ENCODE measurements at regions of chr5 and their contacts with region 1.

Region 1: GRCh38 chr5:140401362-140402257 is at the start of gene ANKHD1:
- DNase-seq: peak; percentile 99
- H3K4me3 Mint-ChIP-seq: no peak within 1 kb of the TSS
- H3K27ac Mint-ChIP-seq: no peak within 1 kb of the TSS
- H3K4me1 Mint-ChIP-seq: peaks cover 27% of the 10 kb centered on the region
- H3K27me3 Mint-ChIP-seq: no peaks in the 10 kb centered on the region
- total RNA-seq, gene ANKHD1: 118 and 121 TPM in 2 replicates

Region 2: DNA sequence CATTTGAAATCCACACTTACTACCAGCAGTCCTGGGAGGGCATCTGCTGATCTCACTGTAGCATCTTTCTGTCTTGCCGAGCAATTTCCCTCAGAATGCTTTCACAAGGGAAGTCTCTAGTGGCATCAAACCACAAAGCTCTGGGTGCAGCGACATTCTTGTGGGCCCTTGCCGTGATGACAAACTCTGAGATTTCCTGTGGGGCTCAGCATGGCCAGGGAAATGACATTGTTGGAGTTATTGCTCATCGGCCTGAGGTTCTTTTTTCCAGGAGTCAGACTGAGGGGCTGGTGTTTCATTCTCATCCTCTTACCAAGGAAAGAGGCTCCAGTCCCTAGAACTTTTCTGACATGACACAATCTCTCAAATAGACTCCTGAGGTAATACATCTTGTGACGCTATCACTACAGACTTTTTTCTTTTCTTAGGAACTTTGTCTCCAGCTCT is 150.1 kb before region 1 on chr5:
- intact Hi-C with region 1: loop called (anchors 5 kb)
- DNase-seq: peak; percentile 91
- H3K4me3 Mint-ChIP-seq: peak overlapping the region; percentile 65
- H3K27ac Mint-ChIP-seq: peak overlapping the region; percentile 88
- H3K4me1 Mint-ChIP-seq: peaks cover 46% of the 10 kb centered on the region
- H3K27me3 Mint-ChIP-seq: no peaks in the 10 kb centered on the region

Region 3: GRCh38 chr5:140381972-140382371 is 19.6 kb before region 1 on chr5:
- intact Hi-C with region 1: no loop called
- DNase-seq: no peak
- H3K4me3 Mint-ChIP-seq: no peak overlapping the region
- H3K27ac Mint-ChIP-seq: peak overlapping the region; percentile 28
- H3K4me1 Mint-ChIP-seq: peaks cover 11% of the 10 kb centered on the region
- H3K27me3 Mint-ChIP-seq: no peaks in the 10 kb centered on the region

Region 4: DNA sequence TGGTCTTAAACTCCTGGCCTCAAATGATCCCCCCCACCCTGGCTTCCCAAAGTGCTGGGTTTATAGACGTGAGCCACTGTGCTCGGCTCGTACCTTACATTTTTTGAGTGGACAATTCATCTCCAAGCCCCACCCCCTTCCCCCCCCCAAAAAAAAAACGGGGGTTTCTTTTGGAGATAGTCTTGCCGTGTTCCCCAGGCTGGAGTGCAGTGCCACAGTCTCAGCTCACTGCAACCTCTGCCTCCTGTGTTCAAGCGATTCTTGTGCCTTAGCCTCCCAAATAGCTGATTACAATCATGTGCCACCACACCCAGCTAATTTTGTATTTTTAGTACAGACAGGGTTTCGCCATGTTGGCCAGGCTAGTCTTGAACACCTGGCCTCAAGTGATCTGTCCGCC is 31.3 kb after region 1 on chr5:
- intact Hi-C with region 1: no loop called
- DNase-seq: no peak
- H3K4me3 Mint-ChIP-seq: no peak overlapping the region
- H3K27ac Mint-ChIP-seq: no peak overlapping the region
- H3K4me1 Mint-ChIP-seq: peaks cover 5% of the 10 kb centered on the region
- H3K27me3 Mint-ChIP-seq: no peaks in the 10 kb centered on the region

Region 5: GRCh38 chr5:140557136-140557805 is 155.7 kb after region 1 on chr5 and contains the start of gene SRA1:
- intact Hi-C with region 1: loop called (anchors 2 kb)
- DNase-seq: peak; percentile 98
- H3K4me3 Mint-ChIP-seq: peak within 1 kb of the TSS; percentile 84
- H3K27ac Mint-ChIP-seq: peak within 1 kb of the TSS; percentile 82
- H3K4me1 Mint-ChIP-seq: peaks cover 47% of the 10 kb centered on the region
- H3K27me3 Mint-ChIP-seq: no peaks in the 10 kb centered on the region
- total RNA-seq, gene SRA1: 53.8 and 54.9 TPM in 2 replicates

Region 6: DNA sequence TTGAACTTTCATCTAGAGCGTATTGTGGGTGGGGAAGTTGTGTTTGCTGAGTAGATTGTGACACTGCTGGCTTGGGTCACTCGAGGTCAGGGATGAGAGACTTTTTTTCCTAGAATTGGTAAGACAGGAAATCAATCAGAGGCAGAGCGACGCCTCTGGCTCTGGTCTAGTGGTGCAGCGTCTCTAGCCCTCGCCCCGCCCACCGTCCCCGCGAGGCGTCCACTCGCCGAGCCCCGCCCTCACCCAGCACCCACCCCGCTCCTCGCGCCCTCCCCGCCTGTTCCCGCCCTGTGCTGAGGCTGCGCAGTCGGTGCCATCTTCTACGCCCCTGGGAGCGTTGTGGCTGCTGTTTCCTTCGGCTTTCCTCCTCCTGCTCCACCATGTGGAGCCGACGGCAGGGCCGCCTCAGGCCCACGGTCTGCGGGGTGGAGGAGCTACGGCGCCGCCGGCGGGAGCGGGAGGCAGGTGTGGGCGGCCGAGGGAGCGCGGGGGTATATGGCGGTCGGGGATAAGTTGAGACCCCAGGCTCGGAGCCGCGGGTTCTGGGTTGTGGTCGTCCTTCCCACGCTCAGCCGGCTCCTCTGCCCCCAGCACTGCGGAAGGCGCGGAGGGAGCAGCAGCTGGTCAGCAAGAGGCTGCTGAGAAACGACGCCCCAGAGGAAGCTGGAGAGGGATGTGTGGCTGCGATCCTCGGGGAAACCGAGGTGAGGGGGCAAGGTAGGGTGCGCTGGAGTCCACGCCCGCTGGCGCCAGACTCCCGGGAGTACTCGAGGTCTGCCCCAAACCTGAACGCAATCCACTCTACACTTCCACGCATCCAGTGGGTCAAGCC is 237.8 kb after region 1 on chr5 and contains the start of gene TMCO6:
- intact Hi-C with region 1: loop called (anchors 2 kb)
- DNase-seq: peak; percentile 98
- H3K4me3 Mint-ChIP-seq: peak within 1 kb of the TSS; percentile 86
- H3K27ac Mint-ChIP-seq: peak within 1 kb of the TSS; percentile 90
- H3K4me1 Mint-ChIP-seq: peaks cover 37% of the 10 kb centered on the region
- H3K27me3 Mint-ChIP-seq: no peaks in the 10 kb centered on the region
- total RNA-seq, gene TMCO6: 38.1 and 41.9 TPM in 2 replicates

Region 7: DNA sequence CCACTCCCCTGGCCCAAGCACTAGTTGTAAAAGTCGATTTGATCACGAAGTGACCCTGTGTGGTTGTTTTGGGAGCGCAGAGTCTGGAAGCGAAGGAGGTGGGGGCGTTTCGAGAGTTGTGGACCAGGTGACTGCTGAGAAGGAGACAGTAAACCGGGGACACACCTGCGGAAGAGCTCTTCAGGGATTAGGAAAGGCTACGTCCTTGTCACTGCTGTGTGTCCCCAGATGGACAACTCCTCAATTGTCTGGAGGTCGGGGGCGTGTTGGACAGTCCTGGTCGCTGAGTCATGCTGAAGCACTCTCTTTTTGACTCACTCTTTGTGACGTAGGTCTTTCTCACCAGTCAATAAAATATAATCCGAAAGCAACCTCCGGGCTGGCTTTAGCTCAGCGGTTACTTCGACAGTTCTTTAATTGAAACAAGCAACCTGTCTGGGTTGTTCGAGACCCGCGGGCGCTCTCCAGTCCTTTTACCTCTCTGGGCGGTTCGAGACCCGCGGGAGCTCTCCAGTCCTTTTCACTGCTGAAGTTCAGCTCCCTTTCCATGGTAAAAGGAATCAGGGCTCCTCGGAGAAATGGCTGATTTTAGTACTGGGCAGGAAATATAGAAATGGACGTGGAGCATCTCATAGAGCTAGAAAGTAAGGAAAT is 309.4 kb after region 1 on chr5:
- intact Hi-C with region 1: loop called (anchors 2 kb)
- DNase-seq: peak; percentile 97
- H3K4me3 Mint-ChIP-seq: peak overlapping the region; percentile 90
- H3K27ac Mint-ChIP-seq: peak overlapping the region; percentile 96
- H3K4me1 Mint-ChIP-seq: peaks cover 20% of the 10 kb centered on the region
- H3K27me3 Mint-ChIP-seq: peaks cover 8% of the 10 kb centered on the region

Measured in activated CD4-positive, alpha-beta T cell treated with anti-CD3 and anti-CD28 coated beads, Interleukin-2, amount 10 ng/mL, durations not matched to agents 24 days and 14 days (primary cell).